Naive thymus-derived CD8-positive, alpha-beta T cell (primary cell): ENCODE measurements at regions of chr3 and their contacts with region 1.

Region 1: GRCh38 chr3:10192953-10193691 is 28.4 kb downstream of the IRAK2 start:
- DNase-seq: peak; percentile 30 to 83 (median 52)
- ATAC-seq: peak in 1 of 2 donors; percentile 26
- H3K4me3 Mint-ChIP-seq: peak overlapping the region; percentile 74 to 91 (median 83)
- H3K27ac Mint-ChIP-seq: peak overlapping the region; percentile 95 to 99 (median 98)
- H3K4me1 Mint-ChIP-seq: peaks cover 53 to 89% (median 79%) of the 10 kb centered on the region in 4 donors
- H3K27me3 Mint-ChIP-seq: no peaks in the 10 kb centered on the region

Region 2: GRCh38 chr3:10164546-10165393 is 28.4 kb before region 1 on chr3 and contains the start of gene IRAK2:
- POLR2A ChIA-PET with region 1: interaction called, 43 read pairs
- DNase-seq: peak; percentile 11 to 74 (median 60)
- ATAC-seq: peak; percentile 80 to 85
- H3K4me3 Mint-ChIP-seq: peak within 1 kb of the TSS; percentile 71 to 95 (median 84)
- H3K27ac Mint-ChIP-seq: peak within 1 kb of the TSS in 9 of 10 donors; percentile 54 to 86 (median 69)
- H3K4me1 Mint-ChIP-seq: peaks cover 5 to 31% (median 17%) of the 10 kb centered on the region in 4 donors
- H3K27me3 Mint-ChIP-seq: no peaks in the 10 kb centered on the region
- polyA plus RNA-seq, gene IRAK2: 2.9 to 6.0 (median 5.1) TPM

Region 3: DNA sequence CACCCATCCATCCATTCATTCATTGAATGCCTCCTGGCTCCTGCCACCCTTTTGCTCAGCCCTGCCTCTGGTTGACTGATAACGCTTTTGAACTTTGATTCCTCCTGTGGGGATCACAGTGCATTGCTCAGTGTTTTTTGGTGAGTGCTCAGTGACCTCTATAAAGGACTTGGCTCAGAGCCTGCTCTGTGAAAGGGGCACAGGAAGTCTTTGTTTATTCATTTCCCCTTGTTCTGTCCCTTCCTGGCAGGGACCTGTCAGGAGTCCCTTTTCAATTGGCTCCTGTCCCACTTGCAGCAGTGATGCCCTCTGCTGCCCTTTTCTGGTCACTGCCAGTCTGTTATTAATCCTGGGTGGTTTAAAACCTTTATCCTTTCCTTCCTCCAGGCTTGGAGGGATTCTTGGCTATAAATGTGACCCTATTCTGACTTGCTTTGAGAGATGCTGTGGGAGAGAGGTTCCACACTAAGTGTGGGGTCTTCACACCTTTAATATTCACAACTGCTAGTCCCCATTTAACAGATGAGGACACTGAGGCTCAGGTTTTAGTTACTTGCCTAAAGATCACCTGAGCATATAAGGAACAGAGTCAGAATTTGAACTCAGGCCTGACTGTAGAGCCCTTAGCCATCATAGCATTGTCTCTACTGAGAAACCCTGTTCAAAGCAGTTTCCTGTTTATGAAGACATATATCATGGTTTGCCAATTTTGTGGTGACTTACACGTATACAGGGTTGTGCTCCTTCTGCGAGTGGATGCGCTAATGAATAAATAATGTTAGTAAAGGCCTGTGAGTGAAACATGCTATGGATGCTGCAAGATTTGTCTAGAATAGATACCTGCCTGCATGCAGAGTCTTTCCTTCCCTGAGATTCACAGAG is 31.9 kb after region 1 on chr3:
- POLR2A ChIA-PET with region 1: interaction called, 58 read pairs
- DNase-seq: peak; percentile 28 to 81 (median 58)
- ATAC-seq: peak; percentile 66 to 80
- H3K4me3 Mint-ChIP-seq: peak overlapping the region in 8 of 10 donors; percentile 30 to 78 (median 60)
- H3K27ac Mint-ChIP-seq: peak overlapping the region; percentile 67 to 94 (median 79)
- H3K4me1 Mint-ChIP-seq: peaks cover 18 to 61% (median 44%) of the 10 kb centered on the region in 4 donors
- H3K27me3 Mint-ChIP-seq: no peaks in the 10 kb centered on the region

Region 4: DNA sequence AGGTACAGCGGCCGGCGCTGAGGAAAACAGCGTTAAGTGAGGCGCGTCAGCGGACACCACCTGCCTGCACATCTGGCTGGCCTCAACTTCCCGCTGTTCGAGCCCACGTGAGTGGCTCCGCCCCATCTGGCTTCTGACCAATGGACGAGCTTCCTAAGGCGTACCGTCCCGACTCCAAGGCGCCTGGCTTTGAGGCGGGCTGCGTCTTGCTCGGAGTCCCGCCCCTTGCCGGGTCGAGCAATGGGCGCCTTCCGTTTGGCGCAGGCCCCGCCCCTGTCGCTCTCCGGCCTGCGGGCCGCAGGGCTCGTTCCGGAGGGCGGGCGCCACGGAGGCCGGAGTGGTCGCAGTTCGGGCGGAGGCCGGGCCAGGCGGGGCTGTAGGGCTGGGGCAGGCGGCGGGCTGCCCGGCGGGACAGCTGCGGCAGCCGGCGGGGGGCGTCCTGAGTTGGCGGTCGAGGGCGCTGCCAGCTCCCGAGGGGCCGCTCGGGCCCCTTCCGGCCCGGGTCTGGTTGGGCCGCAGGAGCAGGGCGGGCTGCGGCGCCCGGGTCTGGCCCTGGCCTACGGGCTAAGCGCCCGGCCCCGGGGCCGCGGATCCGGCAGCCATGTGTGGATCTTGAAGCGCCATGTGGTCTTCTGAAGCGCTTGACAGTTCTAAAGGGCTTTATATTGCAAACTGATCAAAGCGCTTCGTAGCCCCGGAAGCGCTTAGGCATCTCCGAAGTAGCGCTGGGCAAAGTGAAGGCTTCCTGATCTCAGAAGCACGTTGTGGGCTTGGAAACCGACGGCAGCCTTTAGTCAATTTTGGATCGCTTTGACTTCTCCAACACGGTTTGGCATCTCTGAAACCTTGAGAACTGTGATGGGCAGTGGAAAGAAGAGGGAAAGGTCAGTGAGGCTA is 55.3 kb after region 1 on chr3 and contains the start of gene TATDN2:
- POLR2A ChIA-PET with region 1: interaction called, 27 read pairs
- DNase-seq: peak; percentile 82 to 96 (median 88)
- ATAC-seq: peak; percentile 91 to 93
- H3K4me3 Mint-ChIP-seq: peak within 1 kb of the TSS; percentile 95 to 100 (median 98)
- H3K27ac Mint-ChIP-seq: peak within 1 kb of the TSS; percentile 93 to 98 (median 96)
- H3K4me1 Mint-ChIP-seq: peaks cover 29 to 56% (median 49%) of the 10 kb centered on the region in 4 donors
- H3K27me3 Mint-ChIP-seq: no peaks in the 10 kb centered on the region
- polyA plus RNA-seq, gene TATDN2: 11.5 to 20.9 (median 14.5) TPM